Sigmoid colon (tissue), 7 donors: ENCODE measurements at regions of chr7 and their contacts with region 1.

Region 1: DNA sequence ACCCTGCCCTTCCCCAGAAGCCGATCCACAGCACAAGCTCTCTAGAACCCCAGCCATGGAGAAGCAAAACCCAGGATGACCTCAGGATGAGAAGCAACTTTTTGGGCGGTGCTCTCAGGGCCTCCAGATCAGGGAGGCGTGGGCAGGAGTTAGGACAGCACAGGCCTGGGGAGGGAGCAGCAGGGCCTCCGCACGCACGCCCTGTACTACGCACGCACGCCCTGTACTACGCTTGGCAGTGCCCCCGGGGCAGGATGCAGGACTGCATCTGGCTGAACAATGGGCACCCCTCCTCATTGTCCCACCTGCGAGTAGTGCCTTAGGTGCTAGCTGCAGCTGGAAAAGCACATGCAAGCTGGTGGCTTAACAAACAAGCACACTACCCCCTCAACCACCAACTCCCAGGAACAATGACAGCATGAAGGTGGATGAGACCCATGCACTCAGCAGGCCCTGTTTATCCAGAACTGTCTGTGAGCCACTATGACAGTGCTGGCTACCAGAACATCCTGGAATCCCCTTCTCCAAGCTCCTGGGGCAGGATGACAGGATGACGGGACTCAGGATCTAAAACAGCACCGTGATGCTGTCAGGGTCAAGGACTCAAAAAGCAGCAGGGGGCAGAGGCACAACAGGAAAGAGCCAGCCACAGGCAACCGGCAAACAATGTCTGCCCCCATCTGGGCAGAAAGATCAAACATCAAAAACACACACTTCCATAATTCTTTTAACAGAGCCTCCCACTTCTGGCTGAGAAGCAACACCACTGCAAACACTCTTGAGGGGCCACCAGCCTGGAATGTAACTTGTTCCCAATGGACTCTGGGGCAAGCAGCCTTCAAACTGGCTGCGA is 11.8 kb downstream of the PODXL start:
- DNase-seq: peak; percentile 71
- H3K4me3 ChIP-seq: no peak overlapping the region
- H3K27ac ChIP-seq: peak overlapping the region; percentile 21 to 87 (median 54)
- H3K4me1 ChIP-seq: peaks cover 3 to 64% (median 36%) of the 10 kb centered on the region in 4 donors
- H3K27me3 ChIP-seq: no peaks in the 10 kb centered on the region
- CTCF ChIP-seq: no peak
- EP300 ChIP-seq: no peak
- POLR2A ChIP-seq: no peak

Region 2: GRCh38 chr7:131507592-131508331 is 36.9 kb before region 1 on chr7:
- intact Hi-C with region 1: loop called (anchors 5 kb)
- DNase-seq: peak; percentile 92
- H3K4me3 ChIP-seq: no peak overlapping the region
- H3K27ac ChIP-seq: no peak overlapping the region
- H3K4me1 ChIP-seq: peaks cover 0 to 27% (median 18%) of the 10 kb centered on the region in 4 donors
- H3K27me3 ChIP-seq: no peaks in the 10 kb centered on the region
- CTCF ChIP-seq: peak; percentile 79 to 91 (median 88)
- EP300 ChIP-seq: no peak
- POLR2A ChIP-seq: no peak

Region 3: GRCh38 chr7:131889572-131890150 is 345.0 kb after region 1 on chr7:
- intact Hi-C with region 1: no loop called
- DNase-seq: no peak
- H3K4me3 ChIP-seq: no peak overlapping the region
- H3K27ac ChIP-seq: no peak overlapping the region
- H3K4me1 ChIP-seq: no peaks in the 10 kb centered on the region
- H3K27me3 ChIP-seq: no peaks in the 10 kb centered on the region
- CTCF ChIP-seq: no peak
- EP300 ChIP-seq: no peak
- POLR2A ChIP-seq: no peak